Activated naive CD4-positive, alpha-beta T cell treated with anti-CD3 and anti-CD28 coated beads for 36 hours (primary cell): ENCODE measurements at regions of chr16 and their contacts with region 1.

Region 1: GRCh38 chr16:69930117-69930776 is 20.9 kb upstream of the CLEC18A start:
- DNase-seq: peak; percentile 59
- H3K4me3 Mint-ChIP-seq: no peak overlapping the region
- H3K27ac Mint-ChIP-seq: no peak overlapping the region
- H3K4me1 Mint-ChIP-seq: no peaks in the 10 kb centered on the region
- H3K27me3 Mint-ChIP-seq: no peaks in the 10 kb centered on the region

Region 2: GRCh38 chr16:69396187-69397061 is 533.8 kb before region 1 on chr16:
- CTCF ChIA-PET with region 1: no interaction called
- intact Hi-C with region 1: loop called (anchors 2 kb)
- DNase-seq: peak; percentile 87
- H3K4me3 Mint-ChIP-seq: no peak overlapping the region
- H3K27ac Mint-ChIP-seq: peak overlapping the region; percentile 62
- H3K4me1 Mint-ChIP-seq: peaks cover 20% of the 10 kb centered on the region
- H3K27me3 Mint-ChIP-seq: peaks cover 4% of the 10 kb centered on the region

Region 3: GRCh38 chr16:69796351-69797118 is 133.7 kb before region 1 on chr16:
- CTCF ChIA-PET with region 1: interaction called, 14 read pairs
- intact Hi-C with region 1: loop called (anchors 1 kb)
- DNase-seq: peak; percentile 41
- H3K4me3 Mint-ChIP-seq: no peak overlapping the region
- H3K27ac Mint-ChIP-seq: no peak overlapping the region
- H3K4me1 Mint-ChIP-seq: no peaks in the 10 kb centered on the region
- H3K27me3 Mint-ChIP-seq: no peaks in the 10 kb centered on the region

Region 4: GRCh38 chr16:69904495-69905170 is 25.6 kb before region 1 on chr16:
- CTCF ChIA-PET with region 1: interaction called, 14 read pairs
- intact Hi-C with region 1: no loop called
- DNase-seq: no peak
- H3K4me3 Mint-ChIP-seq: no peak overlapping the region
- H3K27ac Mint-ChIP-seq: no peak overlapping the region
- H3K4me1 Mint-ChIP-seq: no peaks in the 10 kb centered on the region
- H3K27me3 Mint-ChIP-seq: no peaks in the 10 kb centered on the region

Region 5: DNA sequence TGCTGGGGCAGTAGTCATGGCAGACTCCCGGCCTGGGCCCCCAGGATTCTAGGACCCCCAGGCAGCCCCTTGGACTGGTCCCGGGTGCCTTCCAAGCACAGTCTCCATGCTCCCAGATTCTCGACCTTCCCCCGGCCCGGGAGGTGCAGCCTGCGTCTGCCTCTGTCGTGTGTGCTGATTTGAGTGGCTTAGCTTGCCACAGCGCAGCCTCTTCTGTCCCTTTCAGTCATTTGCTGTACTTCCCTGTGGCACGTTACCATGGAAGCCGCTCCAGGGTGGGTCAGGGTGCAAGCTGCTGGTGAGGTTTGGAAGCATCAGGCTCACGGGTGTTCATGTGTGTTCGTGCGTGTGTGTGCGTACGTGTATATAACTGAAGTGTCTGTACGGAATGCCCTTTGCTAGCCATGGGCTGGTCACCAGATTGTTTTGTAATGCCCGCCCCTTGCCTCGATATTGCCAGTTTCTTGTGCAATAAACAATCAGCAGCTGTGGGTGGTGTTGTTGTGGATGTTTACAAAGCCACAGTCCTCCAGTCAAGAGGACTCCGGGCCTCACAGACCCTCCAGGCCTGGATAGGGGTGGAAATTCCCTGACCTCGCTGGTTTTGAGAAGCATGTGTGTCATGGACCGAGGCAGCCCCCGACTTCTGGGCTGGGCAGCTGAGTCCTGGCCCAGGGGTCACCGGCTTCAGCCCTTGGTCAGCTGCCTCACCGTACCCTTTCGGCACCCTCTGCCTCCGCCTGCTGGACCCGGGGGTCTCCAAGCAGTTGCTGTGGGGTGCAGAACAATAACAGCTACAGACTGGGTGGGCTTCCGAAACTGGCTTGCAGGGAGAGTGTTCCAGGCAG is 11.2 kb after region 1 on chr16:
- CTCF ChIA-PET with region 1: interaction called, 22 read pairs
- intact Hi-C with region 1: no loop called
- DNase-seq: no peak
- H3K4me3 Mint-ChIP-seq: no peak overlapping the region
- H3K27ac Mint-ChIP-seq: no peak overlapping the region
- H3K4me1 Mint-ChIP-seq: no peaks in the 10 kb centered on the region
- H3K27me3 Mint-ChIP-seq: no peaks in the 10 kb centered on the region